ENCODE measurements at regions of chr19 and their contacts with region 1.

Region 1: DNA sequence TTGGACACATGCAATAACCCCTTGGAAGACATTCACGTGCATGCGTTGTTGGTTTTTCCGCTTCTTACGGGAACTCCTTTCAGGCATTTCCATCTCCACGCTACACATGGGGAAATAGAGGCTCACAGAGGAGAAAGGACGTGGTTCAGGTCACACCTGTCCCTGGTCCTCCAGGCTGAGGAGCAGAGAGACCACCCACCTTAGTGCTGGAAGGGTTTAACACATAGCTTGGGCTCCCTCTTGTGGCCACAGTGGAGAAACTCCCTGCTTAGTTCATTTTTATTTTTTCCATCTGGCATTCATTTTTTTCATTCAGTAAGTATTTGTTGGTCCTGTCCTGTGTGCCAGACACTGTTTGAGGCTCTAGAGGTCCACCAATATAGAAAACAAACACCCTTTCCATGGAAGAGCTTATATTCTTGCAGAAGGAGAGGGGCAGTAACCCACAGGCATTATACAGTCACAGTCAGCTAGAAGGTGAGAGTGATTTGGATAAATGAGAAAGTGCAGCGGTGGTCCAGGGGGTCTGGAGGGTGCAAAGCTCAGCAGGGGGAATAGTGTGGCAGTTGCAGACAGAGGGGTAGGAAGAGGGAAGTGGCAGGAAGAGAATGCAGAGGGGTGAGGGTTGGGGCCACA is 24.2 kb upstream of the TTYH1 start:
- DNase-seq: peak; percentile 38 to 88 (median 74)
- ATAC-seq: peak; percentile 45
- H3K4me3 ChIP-seq: no peak overlapping the region
- H3K4me3 Mint-ChIP-seq: peak overlapping the region; percentile 48
- H3K27ac ChIP-seq: no peak overlapping the region
- H3K27ac Mint-ChIP-seq: peak overlapping the region; percentile 33
- H3K4me1 ChIP-seq: peaks cover 32% of the 10 kb centered on the region
- H3K4me1 Mint-ChIP-seq: peaks cover 34% of the 10 kb centered on the region
- H3K27me3 ChIP-seq: no peaks in the 10 kb centered on the region
- H3K27me3 Mint-ChIP-seq: peaks cover 12% of the 10 kb centered on the region
- CTCF ChIP-seq: peak; percentile 94

Region 2: DNA sequence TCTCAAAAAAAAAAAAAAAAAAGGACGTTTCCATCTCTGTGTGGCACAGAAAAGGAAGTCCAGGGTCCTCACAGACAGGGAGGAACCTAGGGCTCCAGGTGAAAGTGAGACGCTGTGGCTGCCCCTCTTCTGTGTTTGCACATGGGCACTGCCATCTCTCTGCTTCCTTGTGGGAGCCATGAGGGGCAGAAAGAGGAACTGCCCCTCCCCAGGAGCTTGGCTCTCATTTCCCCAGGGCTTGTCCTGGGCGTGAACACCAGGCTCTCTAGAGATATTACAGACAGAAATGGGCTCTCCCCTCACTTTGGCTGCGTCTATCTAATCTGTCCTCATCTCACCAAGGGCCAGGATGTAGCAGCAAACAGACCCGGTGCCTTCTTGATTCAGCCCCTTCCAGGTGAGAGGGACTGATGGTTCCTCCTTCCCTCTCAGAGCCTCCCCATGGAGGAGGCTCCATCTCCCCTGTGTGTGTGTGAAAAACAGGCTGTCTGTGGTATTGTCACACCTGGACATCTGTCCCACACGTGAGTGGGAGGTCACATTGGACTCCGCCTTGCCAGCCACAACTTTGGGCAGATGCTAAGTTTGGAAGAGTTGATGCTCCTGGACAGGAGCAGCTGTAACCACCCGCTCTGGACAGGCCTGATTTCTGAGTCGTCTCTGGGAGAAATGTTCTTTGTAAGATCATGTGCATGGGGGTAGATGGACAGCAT is 51.3 kb before region 1 on chr19:
- CTCF ChIA-PET with region 1: interaction called, 11 read pairs
- POLR2A ChIA-PET with region 1: no interaction called
- intact Hi-C with region 1: no loop called
- DNase-seq: no peak
- ATAC-seq: no peak
- H3K4me3 ChIP-seq: no peak overlapping the region
- H3K4me3 Mint-ChIP-seq: no peak overlapping the region
- H3K27ac ChIP-seq: no peak overlapping the region
- H3K27ac Mint-ChIP-seq: no peak overlapping the region
- H3K4me1 ChIP-seq: no peaks in the 10 kb centered on the region
- H3K4me1 Mint-ChIP-seq: no peaks in the 10 kb centered on the region
- H3K27me3 ChIP-seq: no peaks in the 10 kb centered on the region
- H3K27me3 Mint-ChIP-seq: peaks cover 4% of the 10 kb centered on the region
- CTCF ChIP-seq: no peak

Region 3: DNA sequence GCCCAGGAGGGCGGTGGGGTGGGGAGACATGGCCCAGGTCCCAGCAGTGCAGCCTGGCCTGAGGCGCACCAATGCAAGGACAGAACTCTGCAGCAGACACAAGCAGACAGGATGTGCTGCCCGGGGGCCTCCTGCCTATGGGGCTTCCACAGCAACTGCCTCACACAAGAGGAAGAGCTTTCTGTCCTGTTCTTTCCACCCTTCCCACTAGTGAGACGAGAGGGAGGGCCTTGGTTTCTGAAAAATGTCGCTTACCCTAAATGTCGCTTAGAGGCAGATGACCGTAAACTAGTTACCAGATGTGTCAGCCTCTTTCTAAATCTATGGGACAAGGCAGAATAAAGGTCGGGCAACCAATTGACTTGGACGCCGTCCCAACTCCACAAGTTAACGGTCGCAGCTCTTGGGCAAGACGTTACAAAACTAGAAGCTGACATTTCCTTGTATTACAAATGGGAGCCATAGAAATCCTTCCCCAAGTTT is 26.2 kb before region 1 on chr19 and contains the start of gene LAIR1:
- CTCF ChIA-PET with region 1: interaction called, 17 read pairs
- POLR2A ChIA-PET with region 1: interaction called, 25 read pairs
- intact Hi-C with region 1: loop called (anchors 1 to 2 kb)
- DNase-seq: peak in 8 of 9 experiments; percentile 44 to 78 (median 58)
- ATAC-seq: peak; percentile 54
- H3K4me3 ChIP-seq: peak within 1 kb of the TSS; percentile 53 to 83
- H3K4me3 Mint-ChIP-seq: peak within 1 kb of the TSS; percentile 91
- H3K27ac ChIP-seq: peak within 1 kb of the TSS; percentile 50 to 56
- H3K27ac Mint-ChIP-seq: peak within 1 kb of the TSS; percentile 90
- H3K4me1 ChIP-seq: peaks cover 50% of the 10 kb centered on the region
- H3K4me1 Mint-ChIP-seq: peaks cover 75% of the 10 kb centered on the region
- H3K27me3 ChIP-seq: no peaks in the 10 kb centered on the region
- H3K27me3 Mint-ChIP-seq: no peaks in the 10 kb centered on the region
- CTCF ChIP-seq: no peak
- total RNA-seq, gene LAIR1: 15.3 TPM

Region 4: GRCh38 chr19:54379187-54379678 is 11.8 kb before region 1 on chr19:
- CTCF ChIA-PET with region 1: interaction called, 17 read pairs
- POLR2A ChIA-PET with region 1: interaction called, 17 read pairs
- intact Hi-C with region 1: loop called in 1 of 2 experiments (anchors 1 kb)
- DNase-seq: no peak
- ATAC-seq: no peak
- H3K4me3 ChIP-seq: no peak overlapping the region
- H3K4me3 Mint-ChIP-seq: no peak overlapping the region
- H3K27ac ChIP-seq: no peak overlapping the region
- H3K27ac Mint-ChIP-seq: no peak overlapping the region
- H3K4me1 ChIP-seq: peaks cover 52% of the 10 kb centered on the region
- H3K4me1 Mint-ChIP-seq: peaks cover 63% of the 10 kb centered on the region
- H3K27me3 ChIP-seq: no peaks in the 10 kb centered on the region
- H3K27me3 Mint-ChIP-seq: no peaks in the 10 kb centered on the region
- CTCF ChIP-seq: no peak

Region 5: GRCh38 chr19:54653181-54653809 is 262.2 kb after region 1 on chr19:
- CTCF ChIA-PET with region 1: no interaction called
- POLR2A ChIA-PET with region 1: no interaction called
- intact Hi-C with region 1: no loop called
- DNase-seq: peak in 2 of 9 experiments; percentile 35 to 55
- ATAC-seq: no peak
- H3K4me3 ChIP-seq: no peak overlapping the region
- H3K4me3 Mint-ChIP-seq: no peak overlapping the region
- H3K27ac ChIP-seq: no peak overlapping the region
- H3K27ac Mint-ChIP-seq: no peak overlapping the region
- H3K4me1 ChIP-seq: no peaks in the 10 kb centered on the region
- H3K4me1 Mint-ChIP-seq: no peaks in the 10 kb centered on the region
- H3K27me3 ChIP-seq: no peaks in the 10 kb centered on the region
- H3K27me3 Mint-ChIP-seq: peaks cover 13% of the 10 kb centered on the region
- CTCF ChIP-seq: peak; percentile 64

Measured in CD8-positive, alpha-beta T cell (primary cell).